Activated CD4-positive, alpha-beta memory T cell treated with anti-CD3 and anti-CD28 coated beads for 36 hours (primary cell): ENCODE measurements at regions of chr7 and their contacts with region 1.

Region 1: GRCh38 chr7:114832906-114833595 is 88.8 kb upstream of the MDFIC start:
- DNase-seq: no peak
- H3K4me3 Mint-ChIP-seq: peak overlapping the region; percentile 34
- H3K27ac Mint-ChIP-seq: peak overlapping the region; percentile 90
- H3K4me1 Mint-ChIP-seq: peaks cover 37% of the 10 kb centered on the region
- H3K27me3 Mint-ChIP-seq: peaks cover 2% of the 10 kb centered on the region

Region 2: DNA sequence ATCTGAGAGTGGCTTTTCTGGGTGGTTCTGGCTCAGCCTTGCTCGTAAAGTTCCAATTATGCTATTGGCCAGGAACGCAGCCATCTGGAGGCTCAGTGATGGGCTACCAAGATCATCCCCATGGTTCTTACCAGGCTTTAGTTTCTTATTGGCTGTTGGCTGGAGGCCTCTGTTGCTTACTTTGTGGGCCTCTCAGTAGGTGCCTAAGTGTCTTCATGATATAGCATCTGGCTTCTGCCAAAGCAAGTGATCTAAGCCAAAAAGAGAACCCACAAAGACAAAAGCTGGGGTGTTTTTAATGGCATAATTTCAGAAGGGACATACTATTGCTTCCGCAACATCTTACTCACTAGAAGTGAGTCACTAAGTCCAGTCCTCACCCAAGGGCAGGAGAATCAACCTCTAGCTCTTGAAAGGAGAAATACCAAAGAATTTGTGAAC is 43.2 kb before region 1 on chr7:
- CTCF ChIA-PET with region 1: no interaction called
- POLR2A ChIA-PET with region 1: interaction called, 4 read pairs
- intact Hi-C with region 1: loop called (anchors 1 kb)
- DNase-seq: no peak
- H3K4me3 Mint-ChIP-seq: no peak overlapping the region
- H3K27ac Mint-ChIP-seq: peak overlapping the region; percentile 59
- H3K4me1 Mint-ChIP-seq: peaks cover 55% of the 10 kb centered on the region
- H3K27me3 Mint-ChIP-seq: peaks cover 3% of the 10 kb centered on the region

Region 3: DNA sequence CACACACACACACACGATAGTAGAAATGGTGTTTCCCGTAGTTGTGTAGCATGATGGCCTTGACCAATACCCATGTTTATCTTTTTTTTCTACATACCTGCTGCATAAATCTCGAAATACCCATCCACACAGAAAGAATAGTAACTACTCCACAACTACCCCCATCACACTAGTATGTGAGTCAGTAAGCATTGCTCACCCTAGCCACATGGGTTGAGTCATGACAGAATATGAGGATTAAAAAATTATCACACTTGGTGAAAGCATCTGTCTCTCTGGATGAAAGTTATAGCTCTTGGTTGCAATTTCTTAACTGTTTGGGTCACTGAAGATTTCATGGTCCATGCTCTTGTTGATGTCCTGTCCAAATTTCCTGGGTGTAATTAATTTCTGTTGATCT is 14.6 kb before region 1 on chr7:
- CTCF ChIA-PET with region 1: no interaction called
- POLR2A ChIA-PET with region 1: interaction called, 5 read pairs
- intact Hi-C with region 1: loop called (anchors 1 kb)
- DNase-seq: peak; percentile 32
- H3K4me3 Mint-ChIP-seq: no peak overlapping the region
- H3K27ac Mint-ChIP-seq: peak overlapping the region; percentile 4
- H3K4me1 Mint-ChIP-seq: peaks cover 37% of the 10 kb centered on the region
- H3K27me3 Mint-ChIP-seq: no peaks in the 10 kb centered on the region

Region 4: DNA sequence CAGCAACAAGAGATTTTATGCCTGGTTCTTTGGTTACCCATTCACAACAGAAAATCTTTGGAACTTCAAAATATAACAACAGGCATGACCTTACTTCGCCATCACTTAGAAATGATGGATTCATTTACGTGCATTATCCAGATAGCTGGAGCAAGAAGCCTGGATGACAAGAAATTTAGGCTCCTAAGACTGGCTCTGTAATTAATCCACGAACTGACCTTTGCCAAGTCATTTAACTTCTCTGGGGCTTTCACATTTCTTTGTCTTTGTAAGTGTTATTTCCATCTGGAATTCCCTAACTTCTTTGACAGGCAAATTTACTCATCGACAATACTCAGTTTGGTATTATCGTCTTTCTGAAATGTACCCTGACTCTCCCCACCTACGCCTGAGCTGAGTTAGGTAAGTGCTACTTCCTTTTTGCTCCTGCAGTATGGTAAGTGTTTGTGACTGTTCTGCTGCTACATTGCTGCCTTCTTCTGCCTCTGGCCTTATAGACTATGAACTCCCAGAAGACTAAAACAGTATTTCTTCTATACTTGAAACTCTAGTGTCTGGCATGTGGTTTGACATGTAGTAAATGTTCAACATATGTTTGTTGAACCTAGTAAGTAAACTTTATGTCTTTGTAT is 83.3 kb after region 1 on chr7:
- CTCF ChIA-PET with region 1: no interaction called
- POLR2A ChIA-PET with region 1: interaction called, 9 read pairs
- intact Hi-C with region 1: loop called (anchors 1 kb)
- DNase-seq: peak; percentile 69
- H3K4me3 Mint-ChIP-seq: peak overlapping the region; percentile 38
- H3K27ac Mint-ChIP-seq: peak overlapping the region; percentile 90
- H3K4me1 Mint-ChIP-seq: peaks cover 57% of the 10 kb centered on the region
- H3K27me3 Mint-ChIP-seq: no peaks in the 10 kb centered on the region

Region 5: GRCh38 chr7:114944745-114945625 is 111.9 kb after region 1 on chr7:
- CTCF ChIA-PET with region 1: no interaction called
- POLR2A ChIA-PET with region 1: no interaction called
- intact Hi-C with region 1: no loop called
- DNase-seq: no peak
- H3K4me3 Mint-ChIP-seq: no peak overlapping the region
- H3K27ac Mint-ChIP-seq: peak overlapping the region; percentile 30
- H3K4me1 Mint-ChIP-seq: peaks cover 91% of the 10 kb centered on the region
- H3K27me3 Mint-ChIP-seq: no peaks in the 10 kb centered on the region

Region 6: GRCh38 chr7:116218051-116218645 is 1385.1 kb after region 1 on chr7:
- CTCF ChIA-PET with region 1: no interaction called
- POLR2A ChIA-PET with region 1: no interaction called
- intact Hi-C with region 1: loop called (anchors 5 kb)
- DNase-seq: no peak
- H3K4me3 Mint-ChIP-seq: no peak overlapping the region
- H3K27ac Mint-ChIP-seq: peak overlapping the region; percentile 61
- H3K4me1 Mint-ChIP-seq: peaks cover 84% of the 10 kb centered on the region
- H3K27me3 Mint-ChIP-seq: no peaks in the 10 kb centered on the region